ENCODE measurements at regions of chr7 and their contacts with region 1.

Region 1: DNA sequence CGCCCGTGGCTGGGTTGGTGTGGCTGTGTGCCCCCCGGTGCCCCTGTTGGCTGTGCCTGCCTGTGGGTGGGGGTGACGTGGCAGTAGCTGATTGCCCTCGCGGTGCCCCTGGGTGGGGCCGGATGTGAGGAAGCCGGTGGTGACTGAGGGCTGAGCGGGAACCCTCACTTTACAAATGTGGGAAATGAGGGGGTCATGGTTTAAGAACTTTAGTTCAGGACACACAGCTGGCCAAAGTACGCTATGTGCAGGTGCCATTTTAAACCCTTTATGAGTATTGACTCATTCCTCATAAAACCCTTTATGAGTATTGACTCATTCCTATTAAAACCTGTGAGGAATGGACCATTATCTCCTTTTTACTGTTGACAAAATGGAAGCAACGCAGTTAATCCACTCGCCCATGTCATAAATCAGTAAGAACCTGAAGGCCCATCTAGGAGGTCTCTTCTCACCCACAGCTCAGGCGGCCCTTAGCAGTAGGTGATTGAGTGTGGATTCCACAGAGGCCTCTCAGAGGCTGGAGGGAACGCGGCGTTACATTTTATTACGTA is 290.1 kb upstream of the COBL start:
- DNase-seq: no peak
- ATAC-seq: no peak
- H3K4me3 ChIP-seq: no peak overlapping the region
- H3K4me3 Mint-ChIP-seq: no peak overlapping the region
- H3K27ac ChIP-seq: no peak overlapping the region
- H3K27ac Mint-ChIP-seq: no peak overlapping the region
- H3K4me1 ChIP-seq: no peaks in the 10 kb centered on the region
- H3K4me1 Mint-ChIP-seq: no peaks in the 10 kb centered on the region
- H3K27me3 ChIP-seq: no peaks in the 10 kb centered on the region
- H3K27me3 Mint-ChIP-seq: peaks cover 2% of the 10 kb centered on the region
- CTCF ChIP-seq: no peak

Region 2: GRCh38 chr7:52876402-52876801 is 1269.7 kb after region 1 on chr7:
- CTCF ChIA-PET with region 1: no interaction called
- POLR2A ChIA-PET with region 1: no interaction called
- intact Hi-C with region 1: loop called in 1 of 2 experiments (anchors 10 kb)
- DNase-seq: no peak
- ATAC-seq: no peak
- H3K4me3 ChIP-seq: no peak overlapping the region
- H3K4me3 Mint-ChIP-seq: no peak overlapping the region
- H3K27ac ChIP-seq: no peak overlapping the region
- H3K27ac Mint-ChIP-seq: no peak overlapping the region
- H3K4me1 ChIP-seq: no peaks in the 10 kb centered on the region
- H3K4me1 Mint-ChIP-seq: no peaks in the 10 kb centered on the region
- H3K27me3 ChIP-seq: no peaks in the 10 kb centered on the region
- H3K27me3 Mint-ChIP-seq: no peaks in the 10 kb centered on the region
- CTCF ChIP-seq: no peak

Measured in CD8-positive, alpha-beta T cell (primary cell).